A673 (cell line): ENCODE measurements at regions of chr3 and their contacts with region 1.

Region 1: GRCh38 chr3:13895155-13896105 is 15.6 kb upstream of the WNT7A start:
- DNase-seq: peak; percentile 94
- H3K4me3 ChIP-seq: peak overlapping the region; percentile 56
- H3K27ac ChIP-seq: no peak overlapping the region
- H3K4me1 ChIP-seq: peaks cover 4% of the 10 kb centered on the region
- H3K27me3 ChIP-seq: no peaks in the 10 kb centered on the region
- CTCF ChIP-seq: no peak

Region 2: DNA sequence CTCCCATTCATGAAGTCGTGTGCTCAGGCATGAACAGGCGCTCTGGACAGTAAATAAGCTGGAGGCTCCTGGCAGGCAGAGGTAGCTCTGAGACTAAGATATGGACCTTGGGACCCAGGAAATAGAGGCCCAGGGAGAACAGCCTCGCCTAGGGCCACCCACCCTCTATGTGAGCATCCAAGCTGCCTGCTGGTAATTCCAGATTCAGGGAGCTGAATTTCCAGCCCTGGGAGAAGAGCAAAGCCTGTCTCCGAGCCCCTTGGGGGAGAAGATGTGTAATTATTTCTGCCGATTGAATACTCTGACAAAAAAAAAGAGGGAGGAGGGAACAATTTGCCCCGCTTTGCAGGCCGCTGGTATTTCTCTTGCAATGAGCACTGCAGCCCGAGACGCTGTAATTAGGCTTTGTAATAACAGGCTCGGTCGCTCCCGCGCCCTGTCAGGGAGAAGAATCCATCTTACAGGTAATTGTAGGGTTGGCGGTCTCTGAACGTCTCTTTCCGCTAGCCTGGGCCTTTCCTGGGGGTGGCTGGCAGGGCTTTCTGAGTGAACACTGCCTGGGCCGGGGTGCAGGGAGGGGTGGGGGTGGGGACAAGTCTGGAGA is 147.1 kb before region 1 on chr3:
- CTCF ChIA-PET with region 1: no interaction called
- POLR2A ChIA-PET with region 1: no interaction called
- intact Hi-C with region 1: no loop called
- DNase-seq: no peak
- H3K4me3 ChIP-seq: no peak overlapping the region
- H3K27ac ChIP-seq: no peak overlapping the region
- H3K4me1 ChIP-seq: no peaks in the 10 kb centered on the region
- H3K27me3 ChIP-seq: no peaks in the 10 kb centered on the region
- CTCF ChIP-seq: no peak

Region 3: GRCh38 chr3:14113965-14114635 is 218.7 kb after region 1 on chr3:
- CTCF ChIA-PET with region 1: interaction called, 6 read pairs
- POLR2A ChIA-PET with region 1: no interaction called
- intact Hi-C with region 1: loop called (anchors 1 kb)
- DNase-seq: no peak
- H3K4me3 ChIP-seq: no peak overlapping the region
- H3K27ac ChIP-seq: no peak overlapping the region
- H3K4me1 ChIP-seq: peaks cover 7% of the 10 kb centered on the region
- H3K27me3 ChIP-seq: no peaks in the 10 kb centered on the region
- CTCF ChIP-seq: peak; percentile 48

Region 4: GRCh38 chr3:14124615-14125190 is 229.3 kb after region 1 on chr3 and contains the starts of genes CHCHD4 and TMEM43:
- CTCF ChIA-PET with region 1: interaction called, 18 read pairs
- POLR2A ChIA-PET with region 1: no interaction called
- intact Hi-C with region 1: no loop called
- DNase-seq: peak; percentile 99
- H3K4me3 ChIP-seq: peak within 1 kb of the TSS; percentile 90
- H3K27ac ChIP-seq: peak within 1 kb of the TSS; percentile 83
- H3K4me1 ChIP-seq: peaks cover 19% of the 10 kb centered on the region
- H3K27me3 ChIP-seq: no peaks in the 10 kb centered on the region
- CTCF ChIP-seq: no peak
- total RNA-seq, gene CHCHD4: 30.3 and 33.5 TPM in 2 replicates
- total RNA-seq, gene TMEM43: 50.8 and 55.6 TPM in 2 replicates

Region 5: DNA sequence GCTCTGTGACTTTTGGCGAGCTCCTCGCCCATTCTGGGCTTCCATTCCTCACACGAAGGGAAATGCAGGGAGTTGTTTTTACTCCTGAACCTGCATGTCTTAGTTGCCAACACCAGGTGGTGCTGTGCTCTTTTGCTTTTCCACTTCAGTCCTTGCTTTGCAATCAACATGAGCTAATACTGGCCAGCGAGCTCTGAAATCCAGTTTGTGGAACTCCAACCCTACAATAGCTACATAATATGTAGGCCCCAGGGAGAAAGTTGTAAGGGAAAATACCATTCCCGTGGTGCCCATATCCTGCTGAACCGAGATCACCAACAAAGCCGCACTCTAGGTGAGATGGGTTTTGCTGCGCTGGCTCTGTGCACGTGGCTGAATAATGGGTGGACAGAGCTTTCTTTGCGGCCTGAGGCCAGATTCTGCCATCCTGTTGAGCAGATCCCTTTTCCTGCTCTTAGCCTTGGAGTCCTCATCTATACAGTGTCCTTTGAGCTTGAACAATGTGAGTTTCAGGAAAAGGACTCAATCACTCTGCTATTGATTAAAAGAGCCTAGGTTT is 308.2 kb after region 1 on chr3:
- CTCF ChIA-PET with region 1: interaction called, 14 read pairs
- POLR2A ChIA-PET with region 1: no interaction called
- intact Hi-C with region 1: no loop called
- DNase-seq: peak; percentile 76
- H3K4me3 ChIP-seq: no peak overlapping the region
- H3K27ac ChIP-seq: no peak overlapping the region
- H3K4me1 ChIP-seq: no peaks in the 10 kb centered on the region
- H3K27me3 ChIP-seq: no peaks in the 10 kb centered on the region
- CTCF ChIP-seq: peak; percentile 89

Region 6: DNA sequence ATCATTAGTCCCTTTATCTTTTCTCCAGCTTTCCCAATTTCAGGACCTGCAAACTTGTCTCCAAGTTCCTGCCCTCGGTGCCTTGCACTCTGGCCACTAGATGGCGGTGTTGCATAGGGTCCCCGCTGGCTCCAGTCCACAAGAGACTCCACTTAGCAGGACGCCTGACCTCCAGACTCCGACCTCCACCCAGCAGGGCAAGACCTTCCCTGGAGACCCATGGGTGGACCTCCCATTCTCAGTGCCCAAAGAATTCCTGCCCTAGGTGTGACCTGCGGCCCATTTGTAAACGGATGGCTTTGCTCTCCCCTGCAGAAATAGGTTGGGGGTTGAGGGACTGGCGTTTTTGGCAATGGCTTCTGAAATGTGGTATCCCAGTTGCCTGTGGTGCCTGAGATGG is 365.8 kb after region 1 on chr3:
- CTCF ChIA-PET with region 1: no interaction called
- POLR2A ChIA-PET with region 1: no interaction called
- intact Hi-C with region 1: loop called (anchors 5 kb)
- DNase-seq: peak; percentile 74
- H3K4me3 ChIP-seq: no peak overlapping the region
- H3K27ac ChIP-seq: no peak overlapping the region
- H3K4me1 ChIP-seq: no peaks in the 10 kb centered on the region
- H3K27me3 ChIP-seq: no peaks in the 10 kb centered on the region
- CTCF ChIP-seq: peak; percentile 97

Region 7: DNA sequence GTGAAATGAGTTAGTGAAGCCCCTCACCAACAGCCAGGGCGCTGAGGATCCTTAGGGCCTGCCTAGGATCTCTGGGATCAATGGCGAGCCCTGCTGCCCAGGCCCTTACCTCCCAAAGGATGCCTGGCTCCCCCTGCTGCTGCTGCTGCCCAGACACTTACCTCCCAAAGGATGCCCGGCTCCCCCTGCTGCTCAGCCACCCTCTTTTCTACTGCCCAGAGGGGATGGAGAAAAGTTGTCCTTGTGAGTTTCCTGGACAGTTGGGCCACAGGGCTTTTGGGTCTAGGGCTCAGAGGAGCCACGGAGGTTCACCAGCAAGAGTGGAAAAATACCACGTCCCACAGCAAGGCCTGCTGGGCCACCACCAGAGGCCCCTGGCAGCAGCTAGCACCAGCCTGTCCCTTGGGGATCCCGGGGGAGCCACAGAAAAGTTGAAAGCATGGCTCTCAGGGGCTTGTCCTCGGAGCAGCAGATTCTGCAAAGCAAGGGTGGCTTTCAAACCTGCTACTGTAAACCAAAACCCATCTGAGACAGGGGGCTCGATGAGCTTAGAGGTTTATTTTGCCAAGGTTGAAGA is 566.4 kb after region 1 on chr3:
- CTCF ChIA-PET with region 1: no interaction called
- POLR2A ChIA-PET with region 1: no interaction called
- intact Hi-C with region 1: loop called (anchors 5 kb)
- DNase-seq: peak; percentile 50
- H3K4me3 ChIP-seq: no peak overlapping the region
- H3K27ac ChIP-seq: no peak overlapping the region
- H3K4me1 ChIP-seq: peaks cover 7% of the 10 kb centered on the region
- H3K27me3 ChIP-seq: no peaks in the 10 kb centered on the region
- CTCF ChIP-seq: peak; percentile 62